WTC11 (cell line): ENCODE measurements at regions of chrX and their contacts with region 1.

Region 1: DNA sequence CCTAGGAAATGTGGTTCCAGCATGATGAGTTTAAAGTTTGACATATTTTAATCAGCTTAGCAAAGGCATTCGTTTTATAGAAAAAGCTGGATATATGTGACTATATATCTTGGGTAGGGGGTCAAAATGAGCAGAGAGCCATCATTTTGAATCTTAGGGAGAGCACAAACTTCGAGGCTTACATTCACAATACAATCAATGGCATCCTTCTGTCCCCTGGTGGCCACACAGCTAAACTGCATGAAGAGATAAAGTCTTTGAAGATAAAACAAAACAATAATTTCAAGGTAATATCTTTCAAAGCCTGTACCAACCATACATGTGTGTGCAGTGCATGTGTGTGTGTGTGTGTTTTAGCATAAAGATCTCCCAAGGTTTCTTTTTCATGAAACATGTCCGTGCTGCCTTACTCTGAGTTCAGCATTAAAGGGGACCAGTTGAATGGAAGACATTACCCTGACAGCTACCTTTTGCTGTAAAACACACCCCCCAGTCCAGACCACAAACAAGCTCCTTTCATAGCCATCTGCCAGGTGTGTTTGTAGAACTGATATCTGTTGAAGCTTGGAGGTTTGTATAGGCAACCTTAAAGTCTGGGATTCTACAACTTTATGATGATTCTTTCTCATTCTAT is 22.0 kb downstream of the DYNLT3 start:
- DNase-seq: peak; percentile 31
- ATAC-seq: peak; percentile 48
- H3K4me3 Mint-ChIP-seq: no peak overlapping the region
- H3K27ac Mint-ChIP-seq: no peak overlapping the region
- H3K4me1 Mint-ChIP-seq: peaks cover 6% of the 10 kb centered on the region; the same call in 1 of the 2 replicates
- H3K27me3 Mint-ChIP-seq: no peaks in the 10 kb centered on the region
- CTCF ChIP-seq: peak; percentile 66

Region 2: GRCh38 chrX:37745354-37745753 is 80.0 kb before region 1 on chrX:
- CTCF ChIA-PET with region 1: interaction called, 23 read pairs
- POLR2A ChIA-PET with region 1: no interaction called
- DNase-seq: peak; percentile 63
- ATAC-seq: peak; percentile 73
- H3K4me3 Mint-ChIP-seq: no peak overlapping the region
- H3K27ac Mint-ChIP-seq: no peak overlapping the region
- H3K4me1 Mint-ChIP-seq: no peaks in the 10 kb centered on the region
- H3K27me3 Mint-ChIP-seq: no peaks in the 10 kb centered on the region
- CTCF ChIP-seq: peak; percentile 54